H1 (cell line): ENCODE measurements at regions of chr12 and their contacts with region 1.

Region 1: DNA sequence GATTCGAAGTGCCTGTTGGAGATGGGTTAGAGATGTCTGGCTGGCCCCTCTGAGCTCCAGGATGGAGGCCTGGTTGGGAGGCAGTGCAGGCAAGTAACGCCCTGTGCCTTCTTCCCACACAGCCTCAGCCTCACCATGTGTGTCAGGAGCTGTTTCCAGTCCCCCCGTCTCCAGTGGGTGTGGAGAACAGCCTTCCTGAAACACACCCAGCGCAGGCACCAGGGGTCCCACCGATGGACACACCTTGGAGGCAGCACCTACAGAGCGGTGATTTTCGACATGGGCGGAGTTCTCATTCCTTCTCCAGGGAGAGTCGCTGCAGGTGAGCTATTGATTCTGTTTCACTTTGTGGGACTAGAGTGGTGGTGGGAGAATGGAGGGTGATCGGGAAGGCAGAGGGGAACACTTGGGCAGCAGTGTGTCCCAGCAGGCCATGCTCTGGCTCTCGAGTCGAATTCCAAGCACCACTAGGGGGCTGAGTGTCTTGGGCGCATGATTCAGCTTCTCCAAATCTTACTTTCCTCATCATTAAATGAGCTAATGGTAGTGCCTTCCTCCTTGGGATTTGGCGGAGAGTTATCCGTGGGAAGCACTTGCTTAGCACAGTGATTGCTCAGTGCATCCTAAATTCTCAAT is 6.8 kb downstream of the ACAD10 start:
- DNase-seq: peak in 1 of 2 experiments; percentile 57
- H3K4me3 ChIP-seq: no peak overlapping the region
- H3K27ac ChIP-seq: no peak overlapping the region
- H3K4me1 ChIP-seq: peaks cover 0 to 3% (median 0%) of the 10 kb centered on the region in 4 experiments; a peak in 1 of 7 replicates
- H3K27me3 ChIP-seq: no peaks in the 10 kb centered on the region
- CTCF ChIP-seq: peak; percentile 34 to 65 (median 63)
- EP300 ChIP-seq: no peak
- POLR2A ChIP-seq: no peak
- RAD21 ChIP-seq: peak in 1 of 2 experiments; percentile 22; a peak in 1 of 4 replicates

Region 2: DNA sequence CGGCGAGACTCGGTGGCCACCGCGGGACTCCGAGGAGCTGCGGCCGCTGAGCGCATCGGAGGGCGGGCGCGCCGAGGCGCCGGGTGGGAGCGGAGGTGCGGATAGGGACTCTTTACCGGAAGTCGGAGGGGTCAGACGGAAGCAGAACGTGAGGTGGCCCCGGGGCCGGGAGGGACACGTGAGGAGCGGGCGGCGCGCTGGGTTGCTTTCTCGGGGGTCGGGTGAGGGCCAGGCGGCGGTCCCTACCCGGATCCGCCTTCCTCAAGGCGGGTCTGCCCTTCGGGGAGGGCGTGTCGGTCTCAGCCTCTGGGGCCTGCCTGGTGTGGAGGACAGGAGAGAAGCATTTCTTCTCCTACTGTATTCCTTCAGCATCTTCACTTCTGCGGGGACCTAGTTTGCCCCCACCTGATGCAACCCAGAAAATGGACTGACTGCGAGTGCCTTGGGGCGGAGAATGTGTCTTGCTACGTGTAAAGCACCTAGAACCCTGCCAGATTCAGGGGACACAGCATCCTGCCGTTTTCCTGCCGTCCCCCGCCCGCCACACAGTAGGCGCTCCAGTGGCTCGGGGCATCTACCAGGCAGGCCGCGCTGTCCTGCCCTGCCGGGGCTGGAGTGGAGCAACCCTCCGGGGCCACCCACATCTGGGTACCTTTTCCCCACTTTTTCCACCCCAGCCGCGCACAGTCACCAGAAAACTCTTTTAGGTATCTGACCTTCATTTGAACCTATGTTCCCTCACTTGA is 93.1 kb before region 1 on chr12:
- CTCF ChIA-PET with region 1: no interaction called
- POLR2A ChIA-PET with region 1: no interaction called
- DNase-seq: peak; percentile 81 to 96
- H3K4me3 ChIP-seq: peak overlapping the region; percentile 77 to 94 (median 90)
- H3K27ac ChIP-seq: peak overlapping the region; percentile 99
- H3K4me1 ChIP-seq: peaks cover 0 to 6% (median 1%) of the 10 kb centered on the region in 4 experiments; a peak in 4 of 7 replicates
- H3K27me3 ChIP-seq: no peaks in the 10 kb centered on the region
- CTCF ChIP-seq: no peak
- EP300 ChIP-seq: peak in 1 of 2 experiments; percentile 60; a peak in 1 of 3 replicates
- POLR2A ChIP-seq: peak; percentile 92 to 97
- RAD21 ChIP-seq: no peak

Region 3: DNA sequence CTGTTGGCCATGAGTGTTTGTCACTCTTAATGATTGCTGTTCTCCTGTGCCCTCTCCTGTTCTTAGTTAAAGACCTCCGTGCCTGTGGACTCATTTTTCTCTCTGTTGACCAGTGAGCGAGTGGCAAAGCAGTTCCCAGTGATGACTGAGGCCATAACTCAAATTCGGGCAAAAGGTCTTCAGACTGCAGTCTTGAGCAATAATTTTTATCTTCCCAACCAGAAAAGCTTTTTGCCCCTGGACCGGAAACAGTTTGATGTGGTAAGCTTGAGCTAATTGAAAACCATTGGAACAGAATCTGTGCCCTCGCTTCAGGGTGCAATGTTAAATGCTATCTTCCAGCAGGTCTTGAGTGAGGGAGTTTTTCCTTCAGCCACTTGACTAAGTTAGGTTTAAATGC is 13.0 kb after region 1 on chr12:
- CTCF ChIA-PET with region 1: interaction called, 10 read pairs
- POLR2A ChIA-PET with region 1: interaction called, 4 read pairs
- DNase-seq: no peak
- H3K4me3 ChIP-seq: no peak overlapping the region
- H3K27ac ChIP-seq: no peak overlapping the region
- H3K4me1 ChIP-seq: no peaks in the 10 kb centered on the region
- H3K27me3 ChIP-seq: no peaks in the 10 kb centered on the region
- CTCF ChIP-seq: no peak
- EP300 ChIP-seq: no peak
- POLR2A ChIP-seq: no peak
- RAD21 ChIP-seq: no peak